PC-3 (cell line): ENCODE measurements at regions of chr20 and their contacts with region 1.

Region 1: GRCh38 chr20:51639206-51639832 is 96.8 kb upstream of the NFATC2 start:
- DNase-seq: peak; percentile 96
- ATAC-seq: peak; percentile 55
- H3K4me3 ChIP-seq: no peak overlapping the region
- H3K27ac ChIP-seq: peak overlapping the region; percentile 65
- H3K4me1 ChIP-seq: peaks cover 38% of the 10 kb centered on the region
- H3K27me3 ChIP-seq: no peaks in the 10 kb centered on the region
- CTCF ChIP-seq: peak; percentile 99

Region 2: DNA sequence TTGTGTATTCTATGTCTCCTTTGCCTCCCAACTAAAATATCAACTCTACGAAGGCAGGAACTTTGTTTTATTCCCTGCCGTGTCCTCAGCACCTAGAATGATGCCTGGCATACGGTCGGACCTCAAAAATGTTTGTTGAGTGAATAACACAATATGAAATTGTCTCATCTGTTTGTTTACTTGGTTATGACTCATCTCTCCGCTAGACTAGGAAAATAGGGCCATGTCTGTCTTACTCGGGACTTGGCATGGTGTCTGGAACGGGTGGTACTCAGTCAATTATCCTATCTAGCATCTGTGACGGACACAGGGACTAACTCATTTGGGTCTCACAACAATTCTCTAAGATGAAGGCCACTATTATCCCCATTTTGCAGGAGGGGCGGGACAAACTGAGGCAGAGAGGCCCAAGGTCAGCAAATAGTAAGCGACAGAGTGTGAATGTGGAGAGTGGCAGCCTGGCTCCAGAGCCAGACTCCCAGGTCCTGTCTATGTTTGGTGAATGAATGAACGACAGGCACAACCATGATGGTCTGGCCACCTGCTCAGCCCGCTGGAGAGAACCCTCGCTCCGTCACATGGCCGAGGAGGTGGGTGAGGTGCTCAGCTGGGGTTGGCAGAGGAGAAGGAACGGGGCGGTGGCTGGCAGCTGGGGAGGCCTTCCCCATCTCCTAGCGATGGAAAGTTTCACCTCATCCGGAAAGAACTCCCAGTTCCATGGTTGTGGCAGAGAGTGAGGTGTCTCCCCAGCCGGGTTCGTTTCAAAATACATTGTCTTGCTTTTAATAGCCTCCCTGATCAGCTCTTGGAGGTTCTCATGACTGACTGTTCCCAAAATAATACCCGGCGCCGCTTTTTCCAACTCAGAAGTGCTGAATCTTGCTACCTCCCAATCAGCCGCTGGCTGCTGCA is 69.2 kb before region 1 on chr20:
- CTCF ChIA-PET with region 1: no interaction called
- POLR2A ChIA-PET with region 1: no interaction called
- intact Hi-C with region 1: no loop called
- DNase-seq: peak; percentile 98
- ATAC-seq: peak; percentile 75
- H3K4me3 ChIP-seq: no peak overlapping the region
- H3K27ac ChIP-seq: no peak overlapping the region
- H3K4me1 ChIP-seq: peaks cover 25% of the 10 kb centered on the region
- H3K27me3 ChIP-seq: no peaks in the 10 kb centered on the region
- CTCF ChIP-seq: no peak

Region 3: DNA sequence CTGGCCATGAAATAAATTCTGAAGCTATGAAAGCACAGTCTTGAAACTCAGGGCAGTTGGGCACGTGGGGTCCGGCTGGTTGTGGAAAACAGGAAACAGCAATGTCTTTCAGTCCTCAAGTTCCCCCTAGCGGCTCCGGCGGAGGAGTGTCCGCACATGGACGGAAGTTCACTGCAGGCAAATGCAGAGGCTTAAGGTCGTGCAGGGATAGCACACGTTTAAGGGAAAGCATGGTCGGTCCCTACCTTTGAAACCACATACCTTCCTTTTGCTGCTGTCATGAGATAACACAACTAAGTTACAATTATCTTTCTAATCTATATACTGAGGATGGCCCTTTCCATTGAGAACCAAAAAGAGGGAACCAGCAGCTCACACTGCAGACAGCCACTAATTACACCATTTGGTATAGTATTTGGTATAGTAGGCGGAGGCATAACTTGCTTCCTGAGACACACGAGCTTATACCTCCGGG is 44.2 kb before region 1 on chr20:
- CTCF ChIA-PET with region 1: no interaction called
- POLR2A ChIA-PET with region 1: no interaction called
- intact Hi-C with region 1: no loop called
- DNase-seq: peak; percentile 91
- ATAC-seq: peak; percentile 97
- H3K4me3 ChIP-seq: no peak overlapping the region
- H3K27ac ChIP-seq: 0 out of 2 replicates have a peak overlapping the region, but pooled peaks have one; percentile 6
- H3K4me1 ChIP-seq: peaks cover 4% of the 10 kb centered on the region; the same call in 1 of the 2 replicates
- H3K27me3 ChIP-seq: no peaks in the 10 kb centered on the region
- CTCF ChIP-seq: peak; percentile 97

Region 4: GRCh38 chr20:51695574-51696303 is 56.4 kb after region 1 on chr20:
- CTCF ChIA-PET with region 1: interaction called, 4 read pairs
- POLR2A ChIA-PET with region 1: interaction called, 5 read pairs
- intact Hi-C with region 1: loop called (anchors 2 kb)
- DNase-seq: peak; percentile 95
- ATAC-seq: peak; percentile 89
- H3K4me3 ChIP-seq: peak overlapping the region; percentile 50
- H3K27ac ChIP-seq: peak overlapping the region; percentile 90
- H3K4me1 ChIP-seq: peaks cover 36% of the 10 kb centered on the region
- H3K27me3 ChIP-seq: no peaks in the 10 kb centered on the region
- CTCF ChIP-seq: no peak

Region 5: GRCh38 chr20:51767010-51767558 is 127.8 kb after region 1 on chr20:
- CTCF ChIA-PET with region 1: no interaction called
- POLR2A ChIA-PET with region 1: no interaction called
- intact Hi-C with region 1: loop called (anchors 5 kb)
- DNase-seq: peak; percentile 97
- ATAC-seq: peak; percentile 95
- H3K4me3 ChIP-seq: peak overlapping the region; percentile 91
- H3K27ac ChIP-seq: peak overlapping the region; percentile 76
- H3K4me1 ChIP-seq: peaks cover 9% of the 10 kb centered on the region
- H3K27me3 ChIP-seq: no peaks in the 10 kb centered on the region
- CTCF ChIP-seq: no peak

Region 6: GRCh38 chr20:52060794-52061714 is 421.7 kb after region 1 on chr20:
- CTCF ChIA-PET with region 1: interaction called, 8 read pairs
- POLR2A ChIA-PET with region 1: no interaction called
- intact Hi-C with region 1: loop called (anchors 2 kb)
- DNase-seq: peak; percentile 84
- ATAC-seq: peak; percentile 72
- H3K4me3 ChIP-seq: no peak overlapping the region
- H3K27ac ChIP-seq: no peak overlapping the region
- H3K4me1 ChIP-seq: peaks cover 9% of the 10 kb centered on the region
- H3K27me3 ChIP-seq: no peaks in the 10 kb centered on the region
- CTCF ChIP-seq: peak; percentile 96

Region 7: GRCh38 chr20:53594068-53595017 is 1955.0 kb after region 1 on chr20:
- CTCF ChIA-PET with region 1: no interaction called
- POLR2A ChIA-PET with region 1: no interaction called
- intact Hi-C with region 1: loop called (anchors 10 kb)
- DNase-seq: peak; percentile 98
- ATAC-seq: peak; percentile 69
- H3K4me3 ChIP-seq: peak overlapping the region; percentile 88
- H3K27ac ChIP-seq: peak overlapping the region; percentile 65
- H3K4me1 ChIP-seq: peaks cover 41% of the 10 kb centered on the region
- H3K27me3 ChIP-seq: no peaks in the 10 kb centered on the region
- CTCF ChIP-seq: no peak